Left ventricle myocardium inferior (tissue), 1 donor: ENCODE measurements at regions of chr1 and their contacts with region 1.

Region 1: DNA sequence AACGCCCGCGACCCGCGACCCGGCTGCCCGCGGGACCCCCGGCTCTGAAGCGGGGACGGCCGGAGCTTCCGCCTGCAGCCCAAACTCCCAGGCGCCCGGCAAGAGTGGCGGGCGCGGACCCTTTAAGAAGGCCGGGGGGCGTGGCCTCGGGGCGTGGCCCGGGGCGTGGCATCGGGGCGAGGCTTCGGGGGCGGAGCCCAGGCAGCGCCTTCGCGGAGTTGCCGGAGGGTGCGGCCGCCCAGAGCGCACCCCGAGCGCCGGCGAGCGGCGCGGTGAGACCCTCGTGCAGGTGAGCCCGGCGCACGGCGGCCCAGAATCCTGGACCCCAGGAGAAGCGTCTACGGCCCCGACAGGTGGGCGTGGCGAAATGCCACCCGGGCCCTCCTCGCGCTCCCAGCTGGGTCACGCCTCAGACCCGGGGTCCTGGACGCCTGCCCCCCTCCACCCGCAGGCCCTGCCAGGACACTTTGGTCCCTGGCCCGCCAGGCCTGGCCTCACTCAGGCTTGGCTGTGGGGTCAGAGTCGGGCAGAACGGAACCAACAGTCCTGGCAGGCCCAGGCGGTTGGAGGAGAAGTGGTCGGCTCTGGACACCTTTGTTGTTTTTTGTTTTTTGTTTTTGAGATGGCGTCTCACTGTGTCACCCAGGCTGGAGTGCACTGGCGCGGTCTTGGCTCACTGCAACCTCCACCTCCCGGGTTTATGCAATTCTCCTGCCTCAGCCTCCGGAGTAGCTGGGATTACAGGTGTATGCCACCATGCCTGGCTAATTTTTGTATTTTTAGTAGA is 14.4 kb downstream of the RNF223 start:
- DNase-seq: peak; percentile 89
- H3K4me3 ChIP-seq: peak overlapping the region; percentile 72
- H3K27ac ChIP-seq: no peak overlapping the region
- H3K4me1 ChIP-seq: peaks cover 34% of the 10 kb centered on the region
- H3K27me3 ChIP-seq: peaks cover 80% of the 10 kb centered on the region
- CTCF ChIP-seq: no peak

Region 2: DNA sequence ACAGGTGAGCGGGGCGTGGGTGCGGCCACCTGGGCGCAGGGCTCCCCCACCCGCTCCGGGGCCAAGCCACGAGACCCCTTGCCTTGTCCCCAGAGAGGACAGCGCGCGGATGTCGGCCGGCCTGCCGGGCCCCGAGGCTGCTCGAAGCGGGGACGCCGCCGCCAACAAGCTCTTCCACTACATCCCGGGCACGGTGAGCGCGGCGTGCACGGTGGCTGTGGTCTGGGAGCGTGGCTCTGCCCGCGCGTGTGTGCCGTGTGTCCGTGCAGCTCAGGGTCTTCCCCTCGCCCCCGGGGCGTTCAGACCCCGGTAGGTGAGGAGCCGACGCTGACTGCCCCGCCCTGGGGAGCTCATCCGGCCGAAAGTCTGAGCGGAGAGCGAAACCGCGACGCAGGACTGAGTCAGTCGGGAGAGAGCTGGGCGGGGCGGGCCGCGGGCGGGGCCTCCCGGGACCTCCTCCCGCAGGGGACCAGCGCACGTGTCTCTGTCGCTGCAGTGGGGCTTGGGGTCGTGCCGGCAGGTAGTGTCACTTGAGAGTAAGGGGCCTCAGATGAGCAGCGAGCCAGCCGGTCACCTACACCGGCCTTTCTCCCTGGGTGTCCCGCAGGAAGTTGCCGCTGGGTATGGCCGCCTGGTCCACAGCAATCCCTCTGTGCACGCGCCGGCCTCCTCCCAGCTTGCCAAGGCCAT is 92.9 kb before region 1 on chr1:
- intact Hi-C with region 1: no loop called
- DNase-seq: no peak
- H3K4me3 ChIP-seq: peak overlapping the region; percentile 76
- H3K27ac ChIP-seq: no peak overlapping the region
- H3K4me1 ChIP-seq: peaks cover 18% of the 10 kb centered on the region
- H3K27me3 ChIP-seq: peaks cover 45% of the 10 kb centered on the region
- CTCF ChIP-seq: no peak

Region 3: DNA sequence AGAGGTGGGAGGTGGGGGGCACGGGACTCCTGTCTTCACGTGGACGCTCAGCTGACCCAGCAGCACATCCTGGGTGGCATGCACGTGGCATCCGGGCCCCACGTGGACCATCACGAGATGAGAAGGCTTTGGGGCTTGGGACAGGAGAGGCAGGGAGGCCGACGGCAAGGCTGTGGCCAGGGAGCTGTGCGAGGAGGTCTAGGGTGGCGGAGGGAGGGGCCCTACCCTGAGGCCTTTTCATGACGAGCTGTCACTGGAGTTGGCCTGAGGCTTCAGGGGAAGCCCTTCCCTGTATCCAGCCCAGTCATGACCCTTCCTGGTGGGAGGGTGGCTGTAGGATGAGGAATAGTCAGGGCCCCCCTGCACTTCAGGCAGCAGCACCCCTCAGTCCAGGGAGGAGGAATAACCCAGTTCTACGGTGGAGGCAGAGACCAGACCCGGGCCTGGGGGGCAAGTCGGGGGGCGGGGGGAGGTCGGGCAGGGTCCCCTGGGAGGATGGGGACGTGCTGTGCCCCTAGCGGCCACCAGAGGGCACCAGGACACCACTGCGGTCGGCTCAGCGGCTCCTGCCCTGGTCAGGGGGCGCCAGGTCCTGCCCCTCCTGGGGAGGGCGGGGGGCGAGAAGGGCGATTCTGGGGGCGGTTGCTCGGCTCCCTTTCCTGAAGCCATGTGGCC is 75.8 kb before region 1 on chr1:
- intact Hi-C with region 1: loop called (anchors 10 kb)
- DNase-seq: peak; percentile 55
- H3K4me3 ChIP-seq: peak overlapping the region; percentile 74
- H3K27ac ChIP-seq: peak overlapping the region; percentile 97
- H3K4me1 ChIP-seq: peaks cover 44% of the 10 kb centered on the region
- H3K27me3 ChIP-seq: peaks cover 26% of the 10 kb centered on the region
- CTCF ChIP-seq: peak; percentile 96

Region 4: GRCh38 chr1:1344672-1345361 is 285.1 kb after region 1 on chr1:
- intact Hi-C with region 1: no loop called
- DNase-seq: no peak
- H3K4me3 ChIP-seq: no peak overlapping the region
- H3K27ac ChIP-seq: no peak overlapping the region
- H3K4me1 ChIP-seq: peaks cover 51% of the 10 kb centered on the region
- H3K27me3 ChIP-seq: no peaks in the 10 kb centered on the region
- CTCF ChIP-seq: peak; percentile 39